Activated CD4-positive, alpha-beta memory T cell treated with anti-CD3 and anti-CD28 coated beads, Interleukin-2, amount 10 ng/mL, durations not matched to agents 7 days and 5 days (primary cell): ENCODE measurements at regions of chr1 and their contacts with region 1.

Region 1: DNA sequence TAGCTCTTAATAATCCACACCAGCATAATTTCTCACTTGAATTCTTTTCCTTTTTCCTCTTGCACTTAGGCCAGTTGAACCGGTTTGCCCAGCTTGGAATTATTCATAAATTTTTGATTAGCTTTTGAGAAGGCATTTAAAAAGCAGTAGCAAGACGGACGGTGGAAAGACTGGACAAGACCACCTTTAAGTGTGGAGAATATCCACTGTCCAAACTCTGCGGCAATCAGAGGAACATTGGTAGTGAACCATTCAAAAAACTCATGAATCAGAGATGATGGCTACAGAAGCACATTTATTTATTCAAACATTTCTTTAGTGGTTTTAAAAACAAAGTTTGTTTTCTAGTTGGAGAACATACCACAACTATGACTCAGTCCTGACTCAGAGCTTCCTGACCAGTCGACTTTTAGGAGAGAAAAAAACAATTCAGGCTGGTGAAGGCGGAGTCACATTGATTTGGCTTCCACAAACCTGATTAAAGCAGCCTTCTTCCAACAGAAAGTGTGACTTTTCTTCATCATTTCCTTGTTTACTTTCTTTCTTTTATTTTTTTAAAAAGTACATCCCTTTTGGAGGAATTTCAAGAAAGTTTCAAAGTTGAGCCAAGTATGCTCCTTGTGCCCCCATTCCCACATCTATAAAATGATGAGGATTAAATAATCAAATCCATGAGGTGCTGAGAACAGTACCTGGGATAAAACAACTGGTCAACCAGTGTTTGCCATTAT is 128.8 kb downstream of the ADSS2 start:
- DNase-seq: peak; percentile 63
- H3K4me3 Mint-ChIP-seq: peak overlapping the region; percentile 73
- H3K27ac Mint-ChIP-seq: peak overlapping the region; percentile 95
- H3K4me1 Mint-ChIP-seq: peaks cover 82% of the 10 kb centered on the region
- H3K27me3 Mint-ChIP-seq: no peaks in the 10 kb centered on the region

Region 2: GRCh38 chr1:244451951-244452795 is 129.2 kb after region 1 on chr1:
- CTCF ChIA-PET with region 1: no interaction called
- POLR2A ChIA-PET with region 1: interaction called, 19 read pairs
- DNase-seq: peak; percentile 99
- H3K4me3 Mint-ChIP-seq: peak overlapping the region; percentile 90
- H3K27ac Mint-ChIP-seq: peak overlapping the region; percentile 93
- H3K4me1 Mint-ChIP-seq: peaks cover 38% of the 10 kb centered on the region
- H3K27me3 Mint-ChIP-seq: no peaks in the 10 kb centered on the region